PC-9 (cell line): ENCODE measurements at regions of chr1 and their contacts with region 1.

Region 1: GRCh38 chr1:60573726-60574409 is 500.3 kb upstream of the C1orf87 start:
- DNase-seq: peak; percentile 29 to 92
- H3K4me3 ChIP-seq: peak overlapping the region; percentile 33; the same call in 1 of the 2 replicates
- H3K27ac ChIP-seq: peak overlapping the region; percentile 96
- H3K4me1 ChIP-seq: peaks cover 54% of the 10 kb centered on the region
- H3K27me3 ChIP-seq: no peaks in the 10 kb centered on the region
- CTCF ChIP-seq: no peak

Region 2: GRCh38 chr1:60727552-60727951 is 153.7 kb after region 1 on chr1:
- CTCF ChIA-PET with region 1: no interaction called
- POLR2A ChIA-PET with region 1: no interaction called
- intact Hi-C with region 1: loop called (anchors 2 kb)
- DNase-seq: peak; percentile 59 to 81
- H3K4me3 ChIP-seq: no peak overlapping the region
- H3K27ac ChIP-seq: 0 out of 2 replicates have a peak overlapping the region, but pooled peaks have one; percentile 6
- H3K4me1 ChIP-seq: peaks cover 14% of the 10 kb centered on the region; the same call in 1 of the 2 replicates
- H3K27me3 ChIP-seq: no peaks in the 10 kb centered on the region
- CTCF ChIP-seq: no peak